ENCODE measurements at regions of chr3 and their contacts with region 1.

Region 1: GRCh38 chr3:183895296-183895695 is 10.6 kb upstream of the PARL start:
- DNase-seq: peak; percentile 48 to 55
- H3K4me3 ChIP-seq: no peak overlapping the region
- H3K27ac ChIP-seq: no peak overlapping the region
- H3K4me1 ChIP-seq: no peaks in the 10 kb centered on the region
- H3K27me3 ChIP-seq: no peaks in the 10 kb centered on the region
- CTCF ChIP-seq: peak; percentile 97

Region 2: DNA sequence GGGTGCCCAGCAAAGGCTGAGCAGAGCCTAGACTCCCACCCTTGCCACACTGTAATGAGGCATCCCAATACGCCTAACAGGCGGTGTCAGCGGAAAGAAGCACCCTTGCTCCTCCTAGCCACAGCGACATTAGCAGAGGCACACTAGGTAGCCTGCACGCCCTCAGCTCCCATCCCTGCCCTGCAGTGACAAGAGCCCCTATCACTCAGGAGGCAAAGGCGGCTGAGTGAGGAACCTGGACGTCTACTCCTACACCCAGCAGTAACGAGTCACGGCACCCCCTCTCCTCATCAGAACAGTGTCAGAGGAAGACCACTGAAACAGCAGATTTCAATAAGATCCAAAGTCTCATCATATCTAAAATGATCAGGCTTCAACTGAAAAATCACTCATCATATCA is 57.9 kb before region 1 on chr3:
- CTCF ChIA-PET with region 1: no interaction called
- POLR2A ChIA-PET with region 1: no interaction called
- intact Hi-C with region 1: no loop called
- DNase-seq: peak in 1 of 2 experiments; percentile 18
- H3K4me3 ChIP-seq: no peak overlapping the region
- H3K27ac ChIP-seq: no peak overlapping the region
- H3K4me1 ChIP-seq: no peaks in the 10 kb centered on the region
- H3K27me3 ChIP-seq: no peaks in the 10 kb centered on the region
- CTCF ChIP-seq: no peak

Region 3: GRCh38 chr3:183911763-183912499 is 16.6 kb after region 1 on chr3:
- CTCF ChIA-PET with region 1: no interaction called
- POLR2A ChIA-PET with region 1: no interaction called
- intact Hi-C with region 1: no loop called
- DNase-seq: peak in 1 of 2 experiments; percentile 87
- H3K4me3 ChIP-seq: no peak overlapping the region
- H3K27ac ChIP-seq: peak overlapping the region; percentile 63
- H3K4me1 ChIP-seq: peaks cover 48% of the 10 kb centered on the region
- H3K27me3 ChIP-seq: no peaks in the 10 kb centered on the region
- CTCF ChIP-seq: no peak

Region 4: DNA sequence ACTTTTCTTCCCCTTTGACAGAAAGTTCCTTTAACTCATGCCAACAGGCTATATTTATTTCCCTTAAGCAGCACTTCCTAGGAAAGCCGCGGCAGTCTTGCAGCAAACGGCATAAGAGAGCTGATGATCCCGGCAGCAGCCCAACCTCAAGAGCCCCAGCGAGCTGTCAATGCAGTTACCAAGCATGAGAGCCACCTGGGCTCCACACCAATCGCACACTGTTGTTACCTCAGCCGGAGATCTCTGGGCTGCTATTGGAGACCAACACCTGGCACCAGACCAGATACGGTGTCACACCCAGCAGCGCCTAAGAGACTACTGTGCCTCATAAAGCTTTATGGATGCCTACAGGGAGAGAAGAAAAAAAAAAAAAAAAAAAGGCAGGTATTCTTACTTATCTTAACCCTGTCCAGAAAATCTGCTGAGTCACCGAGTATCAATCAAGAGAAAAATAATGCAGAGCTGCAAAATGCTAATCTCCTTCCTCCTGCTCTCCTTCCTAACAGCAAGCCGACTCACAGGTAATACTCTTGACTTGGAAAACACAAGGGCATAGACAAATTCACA is 110.7 kb after region 1 on chr3:
- CTCF ChIA-PET with region 1: interaction called, 12 read pairs
- POLR2A ChIA-PET with region 1: no interaction called
- intact Hi-C with region 1: no loop called
- DNase-seq: peak; percentile 98 to 100
- H3K4me3 ChIP-seq: peak overlapping the region; percentile 22; the same call in 1 of the 2 replicates
- H3K27ac ChIP-seq: peak overlapping the region; percentile 97
- H3K4me1 ChIP-seq: peaks cover 83% of the 10 kb centered on the region
- H3K27me3 ChIP-seq: no peaks in the 10 kb centered on the region
- CTCF ChIP-seq: no peak

Region 5: GRCh38 chr3:184145111-184145524 is 249.8 kb after region 1 on chr3:
- CTCF ChIA-PET with region 1: no interaction called
- POLR2A ChIA-PET with region 1: no interaction called
- intact Hi-C with region 1: loop called (anchors 1 kb)
- DNase-seq: peak; percentile 71 to 74
- H3K4me3 ChIP-seq: no peak overlapping the region
- H3K27ac ChIP-seq: no peak overlapping the region
- H3K4me1 ChIP-seq: no peaks in the 10 kb centered on the region
- H3K27me3 ChIP-seq: no peaks in the 10 kb centered on the region
- CTCF ChIP-seq: peak; percentile 79

Region 6: GRCh38 chr3:184185461-184186308 is 290.4 kb after region 1 on chr3 and contains the start of gene ABCF3:
- CTCF ChIA-PET with region 1: no interaction called
- POLR2A ChIA-PET with region 1: no interaction called
- intact Hi-C with region 1: loop called (anchors 2 kb)
- DNase-seq: peak; percentile 97 to 100
- H3K4me3 ChIP-seq: peak within 1 kb of the TSS; percentile 78
- H3K27ac ChIP-seq: peak within 1 kb of the TSS; percentile 74
- H3K4me1 ChIP-seq: peaks cover 17% of the 10 kb centered on the region
- H3K27me3 ChIP-seq: no peaks in the 10 kb centered on the region
- CTCF ChIP-seq: no peak
- total RNA-seq, gene ABCF3: 98.8 and 137 TPM in 2 replicates

Region 7: GRCh38 chr3:184289426-184289938 is 394.2 kb after region 1 on chr3:
- CTCF ChIA-PET with region 1: interaction called, 12 read pairs
- POLR2A ChIA-PET with region 1: no interaction called
- intact Hi-C with region 1: loop called (anchors 1 kb)
- DNase-seq: peak; percentile 63 to 75
- H3K4me3 ChIP-seq: no peak overlapping the region
- H3K27ac ChIP-seq: no peak overlapping the region
- H3K4me1 ChIP-seq: no peaks in the 10 kb centered on the region
- H3K27me3 ChIP-seq: no peaks in the 10 kb centered on the region; the same call in 1 of the 2 replicates
- CTCF ChIP-seq: peak; percentile 81

Measured in PC-9 (cell line).